Dendritic cell treated with granulocyte-macrophage colony-stimulating factor and Interleukin-4, amounts not matched to agents 40 ng/mL and 50 ng/mL, for 4 days (primary cell): ENCODE measurements at regions of chr7 and their contacts with region 1.

Region 1: DNA sequence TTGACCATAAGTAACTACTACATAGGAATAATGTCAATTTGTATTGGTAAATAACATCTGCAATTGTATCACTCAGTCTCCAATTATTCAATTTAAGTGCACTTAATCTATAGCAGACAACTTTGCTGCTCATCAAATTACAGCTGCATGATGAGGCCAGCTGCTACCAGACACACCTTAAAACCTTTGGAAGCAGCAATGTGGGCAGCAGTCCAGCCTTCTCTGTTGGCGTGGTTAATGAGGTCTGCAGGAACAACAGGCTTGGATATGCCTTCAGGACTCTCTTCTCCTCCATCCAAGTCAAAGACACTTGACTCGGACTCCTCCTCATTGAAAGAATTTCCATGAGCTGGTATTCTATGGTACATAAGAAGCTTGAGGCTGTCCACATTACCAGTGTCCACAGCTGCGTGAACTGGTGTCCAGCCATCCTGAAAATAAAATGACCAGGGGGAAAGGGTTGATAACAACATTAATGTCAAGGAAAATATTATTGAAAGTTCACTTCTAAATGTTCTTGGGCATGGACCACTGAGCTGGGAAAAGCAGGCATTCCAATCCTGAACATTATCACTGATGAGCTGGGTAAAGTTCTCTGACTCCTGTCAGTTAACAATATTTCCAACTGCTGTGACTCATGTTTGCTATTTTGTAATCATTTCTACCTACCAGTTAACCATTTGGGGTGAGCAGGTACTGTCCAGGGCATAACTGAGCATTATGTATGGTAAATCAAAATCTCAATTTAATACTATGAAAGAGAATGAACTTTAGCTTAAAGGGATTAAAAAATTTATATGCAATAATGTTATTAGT is 95.7 kb downstream of the CTTNBP2 start:
- H3K4me3 Mint-ChIP-seq: no peak overlapping the region
- H3K27ac Mint-ChIP-seq: no peak overlapping the region
- H3K4me1 Mint-ChIP-seq: peaks cover 49% of the 10 kb centered on the region
- H3K27me3 Mint-ChIP-seq: no peaks in the 10 kb centered on the region

Region 2: GRCh38 chr7:117731455-117731854 is 46.1 kb before region 1 on chr7:
- intact Hi-C with region 1: loop called (anchors 1 kb)
- H3K4me3 Mint-ChIP-seq: no peak overlapping the region
- H3K27ac Mint-ChIP-seq: peak overlapping the region; percentile 83
- H3K4me1 Mint-ChIP-seq: peaks cover 40% of the 10 kb centered on the region
- H3K27me3 Mint-ChIP-seq: peaks cover 1% of the 10 kb centered on the region

Region 3: DNA sequence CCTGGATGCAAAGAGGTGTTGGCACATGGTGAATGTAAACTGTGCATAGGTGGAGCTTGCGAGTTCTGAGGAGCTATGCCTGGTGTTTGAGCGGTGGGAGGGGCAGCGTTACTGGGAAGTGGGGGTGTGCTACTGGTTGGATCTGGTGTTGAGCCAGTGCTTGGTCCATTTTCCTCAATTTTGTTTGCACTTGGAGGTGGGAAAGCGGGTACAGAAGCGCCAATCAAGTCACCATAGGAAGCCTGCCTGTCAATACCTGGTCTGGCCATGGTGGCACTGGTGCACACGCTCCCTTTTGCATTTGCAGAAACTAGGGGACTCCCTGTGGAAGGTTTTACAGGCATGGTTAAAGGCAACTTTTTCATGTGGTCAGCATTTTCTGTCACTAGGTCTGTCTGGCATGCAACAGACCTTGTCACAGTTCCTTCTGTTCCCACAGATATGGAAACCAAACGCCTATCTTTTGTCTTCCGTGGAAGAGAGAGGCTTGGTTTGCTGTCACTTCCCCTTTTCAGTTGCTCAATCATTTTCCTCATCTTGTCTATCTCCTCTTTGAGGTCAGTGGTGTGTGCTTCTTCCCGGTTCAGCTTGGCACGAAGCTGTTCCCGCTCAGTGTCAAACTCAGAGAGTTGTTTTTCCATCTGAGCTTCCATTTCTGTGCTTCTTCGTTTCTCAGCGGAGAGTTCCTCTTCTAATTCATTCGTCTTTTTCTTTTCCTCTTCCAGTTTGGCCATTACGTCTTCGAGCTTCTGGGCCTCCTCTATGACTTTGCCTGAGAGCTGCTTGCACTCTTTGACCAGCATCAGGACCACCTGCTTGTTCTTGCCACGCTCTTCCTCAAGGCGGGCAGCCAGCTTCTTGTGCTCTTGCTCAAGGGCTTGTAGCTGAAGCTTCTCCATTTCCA is 14.6 kb after region 1 on chr7:
- intact Hi-C with region 1: loop called (anchors 1 kb)
- H3K4me3 Mint-ChIP-seq: peak overlapping the region; percentile 67
- H3K27ac Mint-ChIP-seq: peak overlapping the region; percentile 93
- H3K4me1 Mint-ChIP-seq: peaks cover 64% of the 10 kb centered on the region
- H3K27me3 Mint-ChIP-seq: no peaks in the 10 kb centered on the region

Region 4: GRCh38 chr7:117837841-117838240 is 60.3 kb after region 1 on chr7:
- intact Hi-C with region 1: loop called (anchors 10 kb)
- H3K4me3 Mint-ChIP-seq: no peak overlapping the region
- H3K27ac Mint-ChIP-seq: no peak overlapping the region
- H3K4me1 Mint-ChIP-seq: peaks cover 22% of the 10 kb centered on the region
- H3K27me3 Mint-ChIP-seq: no peaks in the 10 kb centered on the region